Aorta (tissue), 5 donors: ENCODE measurements at regions of chr10 and their contacts with region 1.

Region 1: DNA sequence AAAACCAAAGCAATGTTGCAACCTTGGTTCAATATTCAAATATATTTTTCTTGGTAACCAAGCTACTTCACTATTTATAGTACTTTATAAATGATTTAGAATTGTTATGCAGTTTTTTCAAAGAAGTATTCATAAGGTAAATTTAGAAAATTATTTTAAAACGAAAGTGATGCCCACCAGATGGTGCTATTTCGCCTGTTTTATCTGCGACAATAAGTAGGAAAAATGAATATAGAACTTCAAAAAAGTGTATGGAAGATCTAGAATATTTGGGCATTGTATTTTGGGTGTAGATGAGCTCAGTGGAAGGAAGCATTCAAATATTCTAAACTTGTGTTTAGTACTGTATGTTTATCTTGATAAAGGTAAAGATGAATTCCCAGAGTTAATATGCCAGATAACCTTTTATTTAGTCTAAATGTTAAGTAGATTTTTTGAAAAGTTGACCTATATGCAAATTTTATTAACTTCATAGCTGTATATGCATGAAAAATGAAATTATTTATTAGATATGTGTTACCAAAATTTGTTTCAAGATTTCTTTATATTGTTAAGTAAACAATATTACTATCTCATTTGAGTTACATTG is 93.2 kb downstream of the ADK start:
- DNase-seq: no peak
- ATAC-seq: no peak
- H3K4me3 ChIP-seq: no peak overlapping the region
- H3K27ac ChIP-seq: no peak overlapping the region
- H3K4me1 ChIP-seq: no peaks in the 10 kb centered on the region
- H3K27me3 ChIP-seq: no peaks in the 10 kb centered on the region

Region 2: DNA sequence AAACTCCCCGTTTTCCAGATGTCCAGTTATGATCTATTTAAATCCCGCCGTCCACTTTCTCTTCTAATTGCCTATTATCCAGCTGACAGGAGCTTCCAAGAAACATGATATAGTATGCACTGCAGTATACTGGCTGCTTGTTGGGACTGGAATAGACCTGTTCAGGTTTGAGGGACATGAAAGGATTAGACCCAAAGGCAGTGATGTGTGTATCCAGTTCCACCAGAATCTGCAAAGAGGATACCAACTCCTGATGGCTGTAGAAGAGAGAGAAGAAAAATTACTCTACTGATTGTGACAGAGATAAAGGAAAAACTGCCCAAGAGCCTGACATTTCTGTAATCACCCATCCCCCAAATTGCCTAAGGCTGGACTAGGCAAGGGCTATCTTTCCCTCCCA is 819.7 kb before region 1 on chr10:
- intact Hi-C with region 1: no loop called
- DNase-seq: no peak
- ATAC-seq: no peak
- H3K4me3 ChIP-seq: no peak overlapping the region
- H3K27ac ChIP-seq: no peak overlapping the region
- H3K4me1 ChIP-seq: no peaks in the 10 kb centered on the region
- H3K27me3 ChIP-seq: no peaks in the 10 kb centered on the region

Region 3: DNA sequence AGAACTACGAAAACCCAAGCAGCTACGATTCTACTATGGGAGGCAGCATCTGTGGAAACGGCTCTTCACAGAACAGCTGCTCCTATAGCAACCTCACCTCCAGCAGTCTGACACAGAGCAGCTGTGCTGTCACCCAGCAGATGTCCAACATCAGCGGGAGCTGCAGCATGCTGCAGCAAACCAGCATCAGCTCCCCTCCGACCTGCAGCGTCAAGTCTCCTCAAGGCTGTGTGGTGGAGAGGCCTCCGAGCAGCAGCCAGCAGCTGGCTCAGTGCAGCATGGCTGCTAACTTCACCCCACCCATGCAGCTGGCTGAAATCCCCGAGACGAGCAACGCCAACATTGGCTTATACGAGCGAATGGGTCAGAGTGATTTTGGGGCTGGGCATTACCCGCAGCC is 785.7 kb after region 1 on chr10:
- intact Hi-C with region 1: loop called in 1 of 2 experiments (anchors 10 kb)
- DNase-seq: no peak
- ATAC-seq: peak; percentile 42
- H3K4me3 ChIP-seq: no peak overlapping the region
- H3K27ac ChIP-seq: no peak overlapping the region
- H3K4me1 ChIP-seq: no peaks in the 10 kb centered on the region
- H3K27me3 ChIP-seq: no peaks in the 10 kb centered on the region

Region 4: GRCh38 chr10:75099952-75100763 is 856.0 kb after region 1 on chr10:
- intact Hi-C with region 1: loop called (anchors 1 to 5 kb)
- DNase-seq: peak; percentile 87 to 95
- ATAC-seq: peak; percentile 90
- H3K4me3 ChIP-seq: no peak overlapping the region
- H3K27ac ChIP-seq: no peak overlapping the region
- H3K4me1 ChIP-seq: no peaks in the 10 kb centered on the region
- H3K27me3 ChIP-seq: no peaks in the 10 kb centered on the region